ENCODE measurements at regions of chr18 and their contacts with region 1.

Region 1: GRCh38 chr18:11947214-11948191 is 33.8 kb upstream of the IMPA2 start:
- DNase-seq: peak; percentile 97
- ATAC-seq: peak; percentile 98

Region 2: GRCh38 chr18:11987527-11987926 is 40.0 kb after region 1 on chr18:
- intact Hi-C with region 1: loop called (anchors 5 kb)
- DNase-seq: peak; percentile 39
- ATAC-seq: peak; percentile 88

Region 3: DNA sequence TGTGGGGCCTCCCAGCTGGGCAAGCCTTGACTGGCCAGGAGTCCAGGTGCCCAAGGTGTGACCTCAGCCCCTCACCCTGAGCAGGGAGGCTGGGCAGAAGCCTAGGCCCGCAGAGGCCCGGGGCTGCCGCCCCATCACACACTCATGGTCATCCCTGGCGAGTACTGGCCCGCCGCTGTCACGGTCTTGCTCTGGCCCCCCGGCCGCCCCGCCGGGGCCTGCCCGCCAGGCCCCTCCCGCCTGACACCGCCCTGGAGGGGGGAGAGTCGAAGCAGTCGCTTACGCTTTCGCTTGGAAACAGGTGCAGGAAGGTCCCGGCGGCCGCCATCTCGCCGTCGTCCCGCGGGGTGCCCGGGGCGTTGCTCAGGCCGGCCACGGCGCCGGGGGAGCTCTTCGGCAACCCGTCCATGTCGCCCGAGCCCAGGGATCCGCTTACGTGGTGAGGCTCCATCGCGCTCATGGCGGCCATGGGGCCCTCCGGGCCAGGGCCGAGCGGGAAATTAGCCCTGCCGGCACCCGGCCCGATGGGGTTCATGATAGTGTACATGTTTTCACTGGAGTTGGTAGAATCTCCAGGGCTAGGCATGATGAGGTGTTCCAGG is 119.5 kb after region 1 on chr18:
- intact Hi-C with region 1: no loop called
- DNase-seq: no peak
- ATAC-seq: no peak

Measured in left ventricle myocardium superior (tissue), 1 donor.